ENCODE measurements at regions of chr17 and their contacts with region 1.

Region 1: DNA sequence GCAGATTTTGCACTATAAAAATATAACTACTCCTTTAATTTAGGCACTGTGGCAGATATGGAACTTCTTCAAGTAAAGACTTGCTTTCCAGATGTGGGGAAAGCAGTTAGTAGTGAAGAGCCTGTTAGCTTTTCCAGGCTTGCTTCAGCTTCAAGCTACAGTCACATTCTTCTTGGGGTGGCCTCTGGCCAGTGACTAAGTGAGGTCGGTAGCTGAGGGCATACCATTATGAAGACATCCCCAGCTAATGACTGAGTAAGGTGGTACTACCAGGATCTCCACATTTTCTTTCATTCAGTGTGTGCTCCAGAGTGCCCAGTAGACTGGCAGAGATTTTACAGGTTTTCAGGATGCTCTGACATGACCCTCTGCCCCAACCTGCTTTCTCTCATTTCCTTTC is 167.1 kb upstream of the KIF2B start:
- DNase-seq: no peak
- ATAC-seq: no peak
- H3K4me3 ChIP-seq: no peak overlapping the region
- H3K27ac ChIP-seq: no peak overlapping the region
- H3K4me1 ChIP-seq: no peaks in the 10 kb centered on the region
- H3K27me3 ChIP-seq: no peaks in the 10 kb centered on the region
- CTCF ChIP-seq: no peak
- EP300 ChIP-seq: no peak
- POLR2A ChIP-seq: no peak
- RAD21 ChIP-seq: no peak

Region 2: DNA sequence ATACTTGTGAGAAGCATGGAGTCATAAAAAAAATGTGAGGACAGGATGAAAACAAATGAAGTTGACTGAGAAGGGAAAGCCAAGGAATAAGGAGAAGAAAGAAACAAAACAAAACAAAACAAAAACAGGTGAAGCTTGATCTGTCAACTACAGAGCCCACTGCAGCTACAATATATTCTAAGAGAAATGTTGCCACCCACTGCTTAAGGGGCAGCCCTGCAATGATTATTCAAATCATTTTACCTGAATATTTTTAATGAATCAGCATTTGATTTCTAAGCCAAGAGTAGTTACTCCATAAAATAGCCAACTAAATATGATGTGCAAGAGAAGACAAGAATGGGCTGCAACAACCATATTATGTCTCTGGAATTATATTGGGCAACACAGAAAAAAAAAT is 84.9 kb before region 1 on chr17:
- CTCF ChIA-PET with region 1: no interaction called
- POLR2A ChIA-PET with region 1: no interaction called
- in situ Hi-C with region 1: loop called (anchors 25 kb)
- intact Hi-C with region 1: no loop called
- DNase-seq: no peak
- ATAC-seq: no peak
- H3K4me3 ChIP-seq: no peak overlapping the region
- H3K27ac ChIP-seq: no peak overlapping the region
- H3K4me1 ChIP-seq: no peaks in the 10 kb centered on the region
- H3K27me3 ChIP-seq: no peaks in the 10 kb centered on the region; a peak in 1 of 5 replicates
- CTCF ChIP-seq: no peak
- EP300 ChIP-seq: no peak
- POLR2A ChIP-seq: no peak
- RAD21 ChIP-seq: no peak

Region 3: GRCh38 chr17:53626286-53626685 is 29.3 kb before region 1 on chr17:
- CTCF ChIA-PET with region 1: no interaction called
- POLR2A ChIA-PET with region 1: no interaction called
- in situ Hi-C with region 1: no loop called
- intact Hi-C with region 1: no loop called
- DNase-seq: no peak
- ATAC-seq: no peak
- H3K4me3 ChIP-seq: no peak overlapping the region
- H3K27ac ChIP-seq: no peak overlapping the region
- H3K4me1 ChIP-seq: no peaks in the 10 kb centered on the region
- H3K27me3 ChIP-seq: no peaks in the 10 kb centered on the region
- CTCF ChIP-seq: no peak
- EP300 ChIP-seq: no peak
- POLR2A ChIP-seq: no peak
- RAD21 ChIP-seq: no peak